GM18951 (cell line): ENCODE measurements at regions of chr12 and their contacts with region 1.

Region 1: GRCh38 chr12:68686595-68687521 is at the start of gene NUP107:
- POLR2A ChIP-seq: peak; percentile 93

Region 2: GRCh38 chr12:68743356-68743755 is 56.5 kb after region 1 on chr12:
- in situ Hi-C with region 1: loop called (anchors 5 kb)
- POLR2A ChIP-seq: no peak

Region 3: DNA sequence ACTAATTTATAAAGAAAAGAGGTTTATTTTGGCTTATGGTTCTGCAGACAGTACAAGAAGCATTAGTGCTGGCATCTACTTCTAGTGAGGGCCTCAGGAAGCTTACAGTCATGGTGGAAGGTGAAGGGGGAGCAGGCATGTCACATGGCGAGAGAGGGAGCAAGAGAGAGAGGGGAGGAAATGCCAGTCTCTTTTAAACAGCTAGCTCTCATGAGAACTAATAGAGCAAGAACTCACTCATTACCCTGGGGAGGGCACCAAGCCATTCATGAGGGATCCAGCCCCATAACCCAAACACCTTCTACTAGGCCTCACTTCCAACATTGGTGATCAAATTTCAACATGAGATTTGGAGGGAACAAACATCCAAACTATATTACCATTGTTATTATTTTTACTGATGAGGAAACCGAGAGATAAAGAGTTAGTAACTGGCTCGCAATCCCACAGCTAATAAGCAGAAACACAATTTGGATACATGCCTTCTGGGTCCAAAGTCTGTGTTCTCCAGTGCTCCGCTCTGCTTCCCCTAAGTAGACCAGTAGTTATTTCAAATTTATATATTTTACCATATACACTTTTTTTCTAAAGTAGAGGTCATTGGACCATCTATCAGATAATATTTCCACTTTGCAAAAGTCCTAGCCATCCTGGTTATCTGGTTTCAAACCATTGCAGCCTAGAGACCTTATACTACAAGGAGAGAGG is 68.8 kb after region 1 on chr12:
- in situ Hi-C with region 1: no loop called
- POLR2A ChIP-seq: no peak